Sciatic nerve (tissue), 2 donors: ENCODE measurements at regions of chr18 and their contacts with region 1.

Region 1: GRCh38 chr18:22149710-22150109 is 19.7 kb upstream of the GATA6 start:
- DNase-seq: no peak
- ATAC-seq: no peak

Region 2: GRCh38 chr18:22223254-22223960 is 73.7 kb after region 1 on chr18:
- intact Hi-C with region 1: no loop called
- DNase-seq: no peak
- ATAC-seq: no peak

Region 3: GRCh38 chr18:22238036-22238435 is 88.3 kb after region 1 on chr18:
- intact Hi-C with region 1: no loop called
- DNase-seq: no peak
- ATAC-seq: no peak

Region 4: GRCh38 chr18:22385718-22386117 is 236.0 kb after region 1 on chr18:
- intact Hi-C with region 1: no loop called
- DNase-seq: no peak
- ATAC-seq: no peak

Region 5: DNA sequence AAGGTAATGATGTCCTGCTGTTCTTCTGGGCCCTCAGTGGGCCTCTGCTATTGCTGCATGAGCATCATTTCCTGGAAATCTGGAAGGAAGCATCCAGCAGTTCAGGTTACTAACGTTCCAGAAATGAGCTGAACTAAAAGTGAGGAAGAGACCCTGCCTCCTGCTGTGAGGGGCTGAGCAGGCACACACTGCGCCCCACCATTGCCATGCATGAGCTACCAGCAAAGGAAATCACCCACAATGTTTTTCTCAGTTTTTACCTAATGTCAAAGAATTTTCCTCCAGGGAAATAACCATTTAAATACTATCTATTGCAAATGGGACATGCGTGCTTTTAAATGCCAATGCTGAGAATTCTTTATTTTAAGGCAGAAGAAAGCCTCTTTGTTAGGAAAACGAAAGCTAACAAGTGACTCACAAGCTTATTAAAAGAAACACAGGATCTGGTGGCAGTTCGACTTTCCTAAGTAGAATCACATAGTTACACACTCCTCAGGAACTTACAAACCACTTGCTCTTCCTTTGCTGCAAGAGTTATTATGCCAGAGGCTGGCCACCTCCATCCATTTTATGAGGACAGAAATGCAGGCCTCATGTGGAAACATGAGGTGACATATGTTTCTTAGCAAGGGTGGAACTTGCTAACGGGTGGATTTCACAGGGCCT is 1712.2 kb after region 1 on chr18:
- intact Hi-C with region 1: loop called (anchors 5 kb)
- DNase-seq: no peak
- ATAC-seq: peak; percentile 51